ENCODE measurements at regions of chr14 and their contacts with region 1.

Region 1: DNA sequence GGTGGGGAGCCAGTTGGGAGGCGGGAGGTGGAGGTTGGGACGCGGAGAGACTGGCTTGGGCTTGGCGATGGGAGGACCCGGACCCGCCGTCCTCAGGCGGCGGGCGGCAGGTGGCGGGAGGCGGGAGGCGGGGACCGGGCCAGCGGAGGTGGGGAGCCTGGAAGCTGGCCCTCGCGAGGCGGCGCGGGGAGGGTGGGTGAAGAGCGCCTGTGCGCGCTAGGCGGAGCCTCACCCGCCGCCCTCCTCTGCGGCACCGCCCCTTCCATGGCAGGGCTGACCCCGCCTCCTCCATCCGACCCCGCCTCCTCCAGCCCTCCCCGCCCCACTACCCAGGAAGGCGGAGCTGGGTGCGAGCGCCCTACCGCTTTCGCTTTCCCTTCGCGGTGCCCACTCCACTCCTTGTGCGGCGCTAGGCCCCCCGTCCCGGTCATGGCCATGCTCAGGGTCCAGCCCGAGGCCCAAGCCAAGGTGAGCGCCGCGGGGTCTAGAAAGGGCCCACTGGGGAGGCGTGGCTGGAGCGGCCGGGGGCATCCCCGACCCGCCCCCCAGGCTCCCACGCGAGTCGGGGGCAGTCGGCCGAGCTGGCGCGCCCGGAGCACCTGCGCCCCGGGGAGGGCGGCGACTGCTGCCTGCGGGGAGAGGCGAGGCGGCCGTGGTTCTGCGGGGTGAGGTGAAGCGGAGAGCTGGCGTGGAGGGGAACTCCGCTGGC is at the start of gene PSME1:
- DNase-seq: peak; percentile 89 to 97 (median 95)
- ATAC-seq: peak; percentile 97
- H3K4me3 ChIP-seq: peak within 1 kb of the TSS; percentile 74
- H3K4me3 Mint-ChIP-seq: peak within 1 kb of the TSS; percentile 94
- H3K27ac ChIP-seq: peak within 1 kb of the TSS; percentile 72 to 88
- H3K27ac Mint-ChIP-seq: peak within 1 kb of the TSS; percentile 85
- H3K4me1 ChIP-seq: peaks cover 68% of the 10 kb centered on the region
- H3K4me1 Mint-ChIP-seq: peaks cover 70% of the 10 kb centered on the region
- H3K27me3 ChIP-seq: no peaks in the 10 kb centered on the region
- H3K27me3 Mint-ChIP-seq: no peaks in the 10 kb centered on the region
- CTCF ChIP-seq: no peak
- total RNA-seq, gene PSME1: 166 to 171 TPM

Region 2: DNA sequence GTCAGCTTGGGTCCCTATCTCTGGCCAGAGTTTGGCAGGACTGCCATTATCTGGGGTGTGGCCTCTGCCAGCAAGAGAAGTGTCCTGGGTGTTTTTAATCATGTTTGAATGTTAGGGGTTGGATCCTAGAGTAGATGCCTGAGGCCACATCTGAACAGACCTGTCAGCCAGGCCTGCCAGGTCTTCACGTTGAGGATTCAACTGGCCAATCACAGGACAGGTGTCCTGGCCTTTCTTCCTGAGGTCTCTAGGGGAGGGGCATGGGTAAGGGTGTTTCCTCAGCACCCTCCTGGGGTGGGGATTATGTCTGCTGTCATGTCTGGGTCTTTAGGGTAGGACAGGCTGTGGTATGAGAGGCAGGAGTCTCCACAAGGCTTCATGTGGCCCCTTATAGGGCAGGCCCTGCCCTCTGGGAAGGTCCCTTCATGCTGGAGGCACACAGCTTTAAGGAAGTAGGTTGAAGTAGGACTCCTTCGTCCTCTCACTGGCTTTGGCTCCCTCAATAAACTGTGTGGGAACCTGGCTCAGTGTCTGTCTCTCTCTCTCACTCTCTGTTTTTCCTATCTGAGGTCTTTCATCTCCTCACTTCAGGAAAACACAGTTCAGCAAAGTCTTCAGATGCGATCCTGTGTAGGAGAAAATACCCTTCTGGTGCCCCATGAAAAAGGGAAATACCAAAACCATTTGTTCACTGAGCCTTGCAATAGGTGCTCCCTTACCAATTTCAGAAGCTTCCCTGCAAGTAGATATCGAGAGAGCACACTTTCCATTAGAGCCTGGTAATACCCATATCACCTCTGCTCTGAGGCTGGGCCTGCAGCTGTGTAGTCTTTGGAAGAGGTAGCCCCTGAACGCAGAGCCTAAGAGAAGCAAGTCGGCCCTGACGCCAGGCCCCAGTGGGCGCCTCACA is 12.2 kb before region 1 on chr14:
- CTCF ChIA-PET with region 1: no interaction called
- POLR2A ChIA-PET with region 1: interaction called, 296 read pairs
- intact Hi-C with region 1: loop called in 1 of 2 experiments (anchors 1 kb)
- DNase-seq: no peak
- ATAC-seq: no peak
- H3K4me3 ChIP-seq: no peak overlapping the region
- H3K4me3 Mint-ChIP-seq: no peak overlapping the region
- H3K27ac ChIP-seq: no peak overlapping the region
- H3K27ac Mint-ChIP-seq: no peak overlapping the region
- H3K4me1 ChIP-seq: peaks cover 2% of the 10 kb centered on the region
- H3K4me1 Mint-ChIP-seq: peaks cover 5% of the 10 kb centered on the region
- H3K27me3 ChIP-seq: no peaks in the 10 kb centered on the region
- H3K27me3 Mint-ChIP-seq: no peaks in the 10 kb centered on the region
- CTCF ChIP-seq: no peak